Brain microvascular endothelial cell (primary cell): ENCODE measurements at regions of chr20 and their contacts with region 1.

Region 1: DNA sequence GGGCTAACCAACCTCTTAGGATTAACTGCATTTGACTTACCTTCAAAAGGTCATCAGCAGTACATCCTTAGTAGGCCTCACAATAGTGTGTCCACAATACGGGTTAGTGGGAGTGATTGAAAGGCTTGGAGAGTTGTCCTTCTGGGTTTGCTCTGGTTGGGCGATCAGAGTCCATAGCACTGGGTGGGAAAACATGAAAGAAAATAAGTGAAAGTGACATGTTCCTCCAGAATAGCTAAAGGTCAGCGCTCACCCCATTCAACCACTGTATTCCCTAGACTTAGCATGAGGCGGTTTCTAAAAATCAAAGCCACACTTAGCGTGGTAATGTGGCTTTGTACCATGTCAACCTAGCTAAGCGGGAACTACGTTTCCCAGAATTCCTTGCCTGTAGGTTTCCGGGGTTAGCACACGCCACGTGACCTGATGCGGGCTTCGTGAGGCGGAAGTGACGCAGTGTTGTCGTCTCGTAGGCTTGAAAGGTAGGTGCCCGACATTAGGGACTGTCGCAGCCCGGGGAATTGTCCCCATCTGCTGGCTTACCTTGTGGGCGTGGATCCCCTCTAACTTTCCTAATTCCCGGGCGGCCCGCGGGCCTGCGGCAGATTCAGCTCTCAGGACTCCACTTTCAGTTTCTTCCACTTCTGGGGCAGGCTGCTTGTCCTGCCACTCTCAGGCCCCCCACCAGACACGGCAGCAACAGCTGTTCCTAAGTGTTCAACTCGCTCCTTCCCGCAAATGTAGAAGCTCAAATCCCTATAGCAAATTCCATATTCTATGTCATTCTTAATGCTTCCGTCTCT is 19.8 kb upstream of the SCP2D1 start:
- DNase-seq: peak; percentile 84
- H3K4me3 ChIP-seq: peak overlapping the region; percentile 77
- H3K27ac ChIP-seq: peak overlapping the region; percentile 73
- H3K27me3 ChIP-seq: no peaks in the 10 kb centered on the region
- CTCF ChIP-seq: no peak

Region 2: GRCh38 chr20:18632196-18633009 is 161.4 kb before region 1 on chr20:
- in situ Hi-C with region 1: loop called (anchors 25 kb)
- DNase-seq: peak; percentile 60
- H3K4me3 ChIP-seq: no peak overlapping the region
- H3K27ac ChIP-seq: no peak overlapping the region
- H3K27me3 ChIP-seq: no peaks in the 10 kb centered on the region
- CTCF ChIP-seq: peak; percentile 100